Activated CD4-positive, alpha-beta T cell treated with anti-CD3 and anti-CD28 coated beads, Interleukin-2, amount 10 ng/mL, durations not matched to agents 24 days and 14 days (primary cell): ENCODE measurements at regions of chr5 and their contacts with region 1.

Region 1: DNA sequence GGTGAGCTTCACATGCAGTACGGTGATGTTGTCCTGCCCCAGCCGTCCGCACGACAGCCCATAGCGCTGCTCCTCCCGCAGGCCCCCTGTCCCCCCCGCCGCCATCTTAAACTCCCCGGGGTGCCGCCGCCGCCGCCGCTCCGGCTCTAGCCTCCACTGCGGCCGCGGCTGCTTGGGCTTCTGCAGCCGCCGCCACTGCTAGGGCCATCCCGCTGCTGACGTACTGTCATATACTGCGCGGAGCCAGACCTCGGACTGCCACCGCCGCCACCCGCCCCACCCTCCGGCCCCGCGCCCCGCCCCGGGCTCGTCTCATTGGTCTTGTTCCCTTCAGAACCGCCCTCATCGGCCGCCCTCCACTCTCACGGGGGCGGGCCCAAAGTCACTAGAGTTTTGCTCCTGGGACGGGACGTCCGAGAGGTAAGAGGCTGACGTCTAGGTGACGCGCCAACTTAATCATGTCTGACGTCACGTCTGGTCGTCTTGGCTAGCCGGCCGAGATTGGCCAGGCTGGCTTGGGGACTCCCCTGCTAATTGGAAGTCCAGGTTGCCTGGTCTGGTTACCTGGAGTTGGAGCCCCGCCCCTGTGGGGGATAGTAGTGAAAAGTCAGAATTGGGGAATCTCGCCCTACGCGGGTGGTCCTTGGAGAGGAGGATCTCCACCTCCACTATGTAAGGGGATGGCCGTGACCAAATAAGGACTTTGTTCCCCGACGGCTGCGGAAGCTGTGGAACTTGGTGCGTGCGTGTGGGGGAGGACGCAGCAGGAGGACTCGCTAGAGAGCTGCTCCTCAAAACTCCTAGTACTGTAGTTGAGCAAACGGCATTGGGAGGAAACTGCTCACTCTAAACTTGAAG is at the start of gene ELL2:
- DNase-seq: peak; percentile 99
- H3K4me3 Mint-ChIP-seq: peak within 1 kb of the TSS; percentile 98
- H3K27ac Mint-ChIP-seq: peak within 1 kb of the TSS; percentile 99
- H3K4me1 Mint-ChIP-seq: peaks cover 47% of the 10 kb centered on the region
- H3K27me3 Mint-ChIP-seq: no peaks in the 10 kb centered on the region
- total RNA-seq, gene ELL2: 103 and 111 TPM in 2 replicates

Region 2: DNA sequence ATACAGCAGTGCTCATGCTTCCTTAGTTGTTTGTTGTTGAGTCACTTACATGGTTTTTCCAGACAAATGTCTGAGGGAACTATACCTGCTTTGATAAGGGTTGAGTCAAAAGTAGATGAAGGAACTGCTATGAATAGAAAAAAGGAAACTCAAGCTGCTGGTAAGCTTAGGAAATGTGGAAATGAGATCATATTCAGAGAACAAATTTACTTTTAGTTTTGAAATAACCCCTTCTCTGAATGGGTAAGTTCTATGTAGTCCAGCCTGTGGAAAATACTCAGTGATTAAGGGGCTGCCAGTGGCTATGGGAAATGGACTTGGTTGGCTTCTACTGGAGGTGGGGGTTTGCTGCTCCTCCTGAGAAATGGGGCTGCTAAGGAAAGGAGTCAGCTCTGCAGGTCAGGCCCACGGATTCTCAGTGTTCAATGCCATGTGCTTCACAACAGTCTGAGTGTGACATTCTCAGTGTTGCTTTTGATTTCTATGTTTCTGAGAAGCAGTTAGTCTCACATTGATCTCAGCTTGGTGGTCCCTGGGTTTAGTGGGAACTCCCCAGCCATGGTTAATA is 91.7 kb before region 1 on chr5:
- intact Hi-C with region 1: loop called (anchors 1 kb)
- DNase-seq: peak; percentile 80
- H3K4me3 Mint-ChIP-seq: peak overlapping the region; percentile 60
- H3K27ac Mint-ChIP-seq: peak overlapping the region; percentile 92
- H3K4me1 Mint-ChIP-seq: peaks cover 41% of the 10 kb centered on the region
- H3K27me3 Mint-ChIP-seq: no peaks in the 10 kb centered on the region

Region 3: GRCh38 chr5:95949810-95950209 is 12.0 kb before region 1 on chr5:
- intact Hi-C with region 1: loop called (anchors 1 kb)
- DNase-seq: no peak
- H3K4me3 Mint-ChIP-seq: peak overlapping the region; percentile 37
- H3K27ac Mint-ChIP-seq: no peak overlapping the region
- H3K4me1 Mint-ChIP-seq: peaks cover 52% of the 10 kb centered on the region
- H3K27me3 Mint-ChIP-seq: no peaks in the 10 kb centered on the region

Region 4: GRCh38 chr5:96113170-96113939 is 151.5 kb after region 1 on chr5:
- intact Hi-C with region 1: loop called (anchors 2 kb)
- DNase-seq: peak; percentile 59
- H3K4me3 Mint-ChIP-seq: no peak overlapping the region
- H3K27ac Mint-ChIP-seq: peak overlapping the region; percentile 76
- H3K4me1 Mint-ChIP-seq: peaks cover 11% of the 10 kb centered on the region
- H3K27me3 Mint-ChIP-seq: no peaks in the 10 kb centered on the region

Region 5: GRCh38 chr5:96336351-96336985 is 374.6 kb after region 1 on chr5:
- intact Hi-C with region 1: loop called (anchors 1 kb)
- DNase-seq: peak; percentile 89
- H3K4me3 Mint-ChIP-seq: no peak overlapping the region
- H3K27ac Mint-ChIP-seq: no peak overlapping the region
- H3K4me1 Mint-ChIP-seq: peaks cover 13% of the 10 kb centered on the region
- H3K27me3 Mint-ChIP-seq: peaks cover 12% of the 10 kb centered on the region

Region 6: GRCh38 chr5:96662725-96663513 is 701.1 kb after region 1 on chr5:
- intact Hi-C with region 1: loop called (anchors 2 kb)
- DNase-seq: peak; percentile 96
- H3K4me3 Mint-ChIP-seq: peak overlapping the region; percentile 99
- H3K27ac Mint-ChIP-seq: peak overlapping the region; percentile 99
- H3K4me1 Mint-ChIP-seq: peaks cover 49% of the 10 kb centered on the region
- H3K27me3 Mint-ChIP-seq: peaks cover 12% of the 10 kb centered on the region